ENCODE measurements at regions of chr21 and their contacts with region 1.

Region 1: DNA sequence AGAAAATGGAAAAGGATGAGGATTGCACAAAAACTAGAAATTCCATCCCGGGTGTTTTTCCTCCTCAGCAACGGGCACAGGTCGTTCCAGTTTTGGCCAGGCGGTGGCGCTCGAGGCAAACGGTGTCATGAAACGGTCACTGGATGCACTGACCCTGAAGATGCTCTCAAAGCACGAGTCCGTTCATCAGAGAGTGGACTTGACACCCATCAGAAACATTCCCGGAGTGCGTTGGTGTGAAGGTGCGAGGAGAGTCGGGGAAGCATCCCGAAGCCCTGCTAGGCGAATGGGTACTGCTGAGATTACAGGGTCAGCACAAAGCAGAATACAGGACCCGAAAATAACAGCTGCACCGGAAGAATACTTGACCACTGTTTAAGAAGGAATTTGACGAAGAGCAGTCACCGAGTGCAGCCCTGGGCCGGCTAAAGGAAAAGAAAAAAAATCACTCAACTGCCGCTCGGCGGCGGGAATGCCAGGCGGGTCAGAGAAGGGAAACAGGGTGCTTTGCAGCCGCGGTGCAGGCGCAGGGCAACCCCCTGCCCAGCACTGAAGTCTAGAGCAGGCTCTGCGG is 71.7 kb upstream of the ETS2 start:
- DNase-seq: no peak
- H3K4me3 ChIP-seq: peak overlapping the region; percentile 26 to 36
- H3K27ac ChIP-seq: peak overlapping the region; percentile 77
- H3K4me1 ChIP-seq: peaks cover 7% of the 10 kb centered on the region
- H3K27me3 ChIP-seq: no peaks in the 10 kb centered on the region
- CTCF ChIP-seq: peak; percentile 81 to 97 (median 93)
- POLR2A ChIP-seq: peak in 1 of 2 donors; percentile 17

Region 2: DNA sequence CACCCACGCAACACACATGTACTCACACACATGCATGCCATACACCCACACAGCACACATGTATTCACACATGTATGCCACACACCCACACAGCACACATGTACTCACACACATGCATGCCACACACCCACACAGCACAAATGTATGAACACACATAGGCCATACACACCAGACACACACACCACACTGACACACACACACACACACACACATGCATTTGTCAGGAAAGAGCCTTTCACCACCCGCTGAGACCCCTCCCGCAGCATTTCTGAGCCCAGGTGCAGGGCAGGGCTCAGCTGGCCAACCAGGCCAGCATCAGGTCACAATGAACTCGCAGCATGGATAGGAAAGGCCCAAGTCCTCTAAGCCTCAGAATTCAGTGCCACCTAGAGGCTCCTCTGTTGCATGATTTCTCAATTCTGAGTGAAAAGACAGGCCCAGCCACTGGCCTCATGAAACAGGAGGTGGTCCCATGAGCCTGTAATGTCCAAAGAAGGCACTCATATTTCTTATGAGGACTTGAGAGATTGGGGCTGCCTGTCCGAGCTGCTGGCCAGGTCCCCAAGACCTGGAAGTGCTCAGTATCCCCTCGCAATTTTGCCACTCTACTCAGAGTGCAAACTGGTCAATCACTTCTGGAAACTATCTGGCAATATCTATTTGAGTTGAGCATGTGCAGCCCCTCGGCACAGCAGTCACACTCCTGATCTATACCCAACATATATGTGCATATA is 391.9 kb after region 1 on chr21:
- intact Hi-C with region 1: loop called (anchors 5 kb)
- DNase-seq: no peak
- H3K4me3 ChIP-seq: no peak overlapping the region
- H3K27ac ChIP-seq: peak overlapping the region; percentile 66
- H3K4me1 ChIP-seq: peaks cover 7% of the 10 kb centered on the region
- H3K27me3 ChIP-seq: no peaks in the 10 kb centered on the region
- CTCF ChIP-seq: peak in 2 of 3 experiments; percentile 28 to 68
- POLR2A ChIP-seq: no peak

Region 3: DNA sequence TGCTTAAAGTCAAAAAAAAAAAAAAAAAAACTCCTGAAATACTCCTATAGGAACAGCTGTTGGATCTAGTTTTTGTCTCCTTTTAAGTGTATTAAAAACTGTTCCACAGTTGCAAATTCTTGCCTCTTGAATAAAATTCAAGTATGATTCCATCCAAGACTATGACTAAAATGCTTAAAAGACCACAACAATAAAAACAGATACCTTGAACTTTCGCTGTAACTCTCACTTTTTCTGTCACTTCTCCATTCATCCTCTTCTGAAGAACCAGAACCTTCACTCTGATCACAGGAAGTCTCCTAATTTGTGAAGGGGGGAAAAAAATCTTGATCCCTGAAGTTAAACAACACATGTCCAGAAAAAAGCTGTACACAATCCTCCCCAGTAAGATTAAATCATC is 504.2 kb after region 1 on chr21:
- intact Hi-C with region 1: no loop called
- DNase-seq: no peak
- H3K4me3 ChIP-seq: no peak overlapping the region
- H3K27ac ChIP-seq: no peak overlapping the region
- H3K4me1 ChIP-seq: no peaks in the 10 kb centered on the region
- H3K27me3 ChIP-seq: no peaks in the 10 kb centered on the region
- CTCF ChIP-seq: no peak
- POLR2A ChIP-seq: no peak